SK-N-SH (cell line): ENCODE measurements at regions of chr5 and their contacts with region 1.

Region 1: DNA sequence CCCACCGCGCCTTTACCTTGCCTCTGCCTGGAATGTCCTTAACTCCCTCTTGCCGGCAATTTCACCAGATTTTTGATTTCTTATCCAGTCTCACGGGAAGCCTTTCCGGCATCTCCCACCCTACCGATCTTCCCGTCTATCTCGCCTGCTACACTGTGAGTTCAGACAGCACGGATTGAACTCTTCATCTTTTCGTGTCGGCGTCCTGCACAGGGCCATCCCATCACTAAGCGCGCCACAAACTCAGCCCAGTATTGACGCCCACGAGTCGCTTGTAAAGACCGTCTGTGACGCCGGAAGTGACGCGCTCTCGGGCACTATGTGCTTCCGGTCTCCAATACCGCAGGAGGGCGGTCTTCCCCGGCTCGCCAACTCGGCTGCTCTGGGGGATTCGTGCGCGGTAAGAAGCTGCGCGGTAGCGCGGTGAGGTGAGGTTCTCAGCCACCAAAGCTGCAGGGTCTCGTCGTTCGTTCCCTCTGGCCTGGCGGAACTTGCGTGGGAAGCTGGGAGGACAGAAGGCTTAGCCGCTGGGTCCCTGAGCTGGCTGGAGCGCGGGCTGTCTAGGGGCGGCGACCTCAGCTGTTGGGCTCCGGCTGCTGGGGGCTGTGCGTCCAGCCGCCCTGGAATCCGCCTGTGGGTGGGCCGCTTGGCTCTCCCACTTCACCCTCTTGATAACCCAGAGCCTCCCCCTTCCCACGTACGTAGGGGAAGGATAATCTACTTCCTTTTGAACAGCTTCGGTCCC is at the start of gene ZCCHC9:
- DNase-seq: peak; percentile 90
- H3K4me3 ChIP-seq: peak within 1 kb of the TSS; percentile 76 to 98
- H3K27ac ChIP-seq: peak within 1 kb of the TSS; percentile 84 to 86
- H3K4me1 ChIP-seq: peaks cover 15 to 17% of the 10 kb centered on the region in 2 experiments; a peak in 3 of 4 replicates
- H3K27me3 ChIP-seq: no peaks in the 10 kb centered on the region
- CTCF ChIP-seq: peak; percentile 18; the same call in 1 of the 2 replicates
- EP300 ChIP-seq: no peak
- RAD21 ChIP-seq: peak; percentile 18
- polyA plus RNA-seq, gene ZCCHC9: 13.2 and 14.8 TPM in 2 replicates

Region 2: DNA sequence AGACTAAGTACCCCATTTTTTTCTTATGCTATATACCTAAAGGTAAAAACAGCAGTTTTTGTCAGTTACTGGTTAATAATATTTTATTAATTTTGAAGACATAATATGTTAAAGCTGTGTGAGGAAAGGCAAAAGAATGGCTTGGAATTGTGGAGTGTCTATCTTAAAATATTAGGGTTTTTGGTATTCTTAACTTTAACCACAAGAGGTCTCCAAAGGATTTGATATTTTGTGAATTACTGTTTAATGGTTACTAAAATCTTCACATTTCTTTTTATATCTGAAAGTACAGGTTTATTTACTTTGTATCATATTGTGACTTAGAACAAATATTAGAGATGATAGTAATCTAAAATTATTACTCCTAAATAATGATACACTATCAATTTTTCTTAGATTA is 614.7 kb before region 1 on chr5:
- CTCF ChIA-PET with region 1: interaction called, 17 read pairs
- POLR2A ChIA-PET with region 1: no interaction called
- DNase-seq: no peak
- H3K4me3 ChIP-seq: no peak overlapping the region; a peak in 1 of 4 replicates
- H3K27ac ChIP-seq: no peak overlapping the region
- H3K4me1 ChIP-seq: no peaks in the 10 kb centered on the region
- H3K27me3 ChIP-seq: no peaks in the 10 kb centered on the region
- CTCF ChIP-seq: peak; percentile 64
- EP300 ChIP-seq: no peak
- RAD21 ChIP-seq: peak; percentile 67

Region 3: DNA sequence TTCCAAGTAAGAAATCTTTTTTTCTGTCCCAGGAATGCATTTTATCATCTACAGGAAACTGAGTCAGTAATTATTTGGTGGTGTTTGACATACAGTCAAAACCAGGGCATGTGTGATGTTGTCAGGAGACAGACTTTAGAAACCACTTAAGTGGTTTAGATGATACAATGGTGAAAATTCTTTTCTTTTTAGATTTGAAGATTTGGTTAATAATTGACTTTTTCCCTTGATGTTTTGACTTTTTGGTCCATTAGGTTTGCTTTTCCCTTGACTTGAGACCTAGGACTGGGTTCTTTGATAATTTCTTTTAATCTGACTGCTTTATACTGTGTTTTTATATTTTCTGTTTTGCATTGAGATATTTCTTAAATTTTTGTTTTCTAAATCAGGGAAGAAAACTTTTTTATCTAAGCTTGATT is 256.0 kb before region 1 on chr5:
- CTCF ChIA-PET with region 1: no interaction called
- POLR2A ChIA-PET with region 1: no interaction called
- DNase-seq: no peak
- H3K4me3 ChIP-seq: no peak overlapping the region
- H3K27ac ChIP-seq: no peak overlapping the region
- H3K4me1 ChIP-seq: no peaks in the 10 kb centered on the region; a peak in 1 of 4 replicates
- H3K27me3 ChIP-seq: no peaks in the 10 kb centered on the region
- CTCF ChIP-seq: no peak
- EP300 ChIP-seq: no peak
- RAD21 ChIP-seq: no peak

Region 4: DNA sequence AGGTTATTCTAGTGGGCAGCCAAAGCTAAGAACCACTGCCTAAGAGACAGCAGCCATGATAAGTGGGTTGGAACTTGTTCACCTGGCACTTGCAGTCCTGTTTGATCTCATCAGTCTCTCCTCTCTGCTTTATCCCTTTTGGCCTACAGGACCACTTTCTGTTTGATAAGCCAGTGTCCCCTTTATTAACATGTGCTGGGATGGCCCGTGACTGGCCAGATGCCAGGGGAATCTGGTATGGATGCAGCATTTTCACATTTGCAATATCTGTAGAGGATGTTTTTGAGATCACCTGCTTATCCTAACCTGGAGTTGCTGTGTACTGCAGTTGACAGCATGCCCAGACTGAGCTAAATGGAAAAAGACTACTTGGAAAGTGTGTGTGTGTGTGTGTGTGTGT is 44.7 kb before region 1 on chr5:
- CTCF ChIA-PET with region 1: interaction called, 13 read pairs
- POLR2A ChIA-PET with region 1: no interaction called
- DNase-seq: peak; percentile 67
- H3K4me3 ChIP-seq: no peak overlapping the region
- H3K27ac ChIP-seq: peak overlapping the region in 1 of 2 experiments; percentile 53; a peak in 1 of 4 replicates
- H3K4me1 ChIP-seq: peaks cover 0 to 8% of the 10 kb centered on the region in 2 experiments; a peak in 1 of 4 replicates
- H3K27me3 ChIP-seq: no peaks in the 10 kb centered on the region
- CTCF ChIP-seq: no peak
- EP300 ChIP-seq: peak in 1 of 2 experiments; percentile 42; a peak in 1 of 4 replicates
- RAD21 ChIP-seq: no peak

Region 5: DNA sequence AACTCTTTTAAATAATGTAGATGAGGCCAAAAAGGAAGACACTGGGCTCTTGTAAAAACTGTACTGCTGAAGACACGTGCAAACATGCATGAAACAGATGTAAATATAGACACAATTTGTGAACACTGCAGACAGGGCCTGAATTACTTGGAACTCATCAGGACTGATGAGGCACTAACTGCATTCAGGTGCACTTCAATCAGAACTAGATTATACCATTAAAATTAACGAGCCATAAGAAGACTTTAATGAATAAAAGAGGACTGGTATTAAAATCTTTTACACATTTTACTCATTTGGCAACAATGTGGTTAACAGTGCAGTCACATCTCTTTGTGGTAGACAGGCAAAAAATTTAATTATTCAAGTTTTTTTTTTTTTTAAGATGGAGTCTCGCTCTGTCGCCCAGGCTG is 13.4 kb before region 1 on chr5:
- CTCF ChIA-PET with region 1: interaction called, 19 read pairs
- POLR2A ChIA-PET with region 1: interaction called, 3 read pairs
- DNase-seq: no peak
- H3K4me3 ChIP-seq: no peak overlapping the region
- H3K27ac ChIP-seq: no peak overlapping the region
- H3K4me1 ChIP-seq: no peaks in the 10 kb centered on the region
- H3K27me3 ChIP-seq: no peaks in the 10 kb centered on the region
- CTCF ChIP-seq: no peak
- EP300 ChIP-seq: no peak
- RAD21 ChIP-seq: no peak

Region 6: DNA sequence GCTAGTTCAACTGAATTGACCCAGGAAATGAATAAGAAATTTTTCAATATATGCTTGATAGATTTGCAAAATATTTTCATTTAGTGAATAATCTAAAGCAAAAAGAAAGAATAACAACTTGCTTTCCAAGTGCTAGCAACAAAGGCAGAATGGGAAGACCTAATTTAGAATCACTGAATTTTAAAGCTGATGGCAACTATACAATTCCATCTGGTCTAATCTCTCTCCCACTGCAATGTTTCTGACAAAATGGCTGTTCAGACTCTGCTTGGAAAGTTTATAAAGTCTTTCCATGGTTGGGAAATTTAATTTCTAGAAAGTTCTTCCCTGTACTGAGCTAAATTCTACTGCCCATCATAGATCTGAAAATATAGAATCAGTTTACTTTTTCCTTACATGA is 168.2 kb after region 1 on chr5:
- CTCF ChIA-PET with region 1: no interaction called
- POLR2A ChIA-PET with region 1: no interaction called
- DNase-seq: no peak
- H3K4me3 ChIP-seq: no peak overlapping the region
- H3K27ac ChIP-seq: no peak overlapping the region
- H3K4me1 ChIP-seq: no peaks in the 10 kb centered on the region; a peak in 1 of 4 replicates
- H3K27me3 ChIP-seq: no peaks in the 10 kb centered on the region
- CTCF ChIP-seq: no peak
- EP300 ChIP-seq: no peak
- RAD21 ChIP-seq: no peak